Lower leg skin (tissue), 4 donors: ENCODE measurements at regions of chr7 and their contacts with region 1.

Region 1: DNA sequence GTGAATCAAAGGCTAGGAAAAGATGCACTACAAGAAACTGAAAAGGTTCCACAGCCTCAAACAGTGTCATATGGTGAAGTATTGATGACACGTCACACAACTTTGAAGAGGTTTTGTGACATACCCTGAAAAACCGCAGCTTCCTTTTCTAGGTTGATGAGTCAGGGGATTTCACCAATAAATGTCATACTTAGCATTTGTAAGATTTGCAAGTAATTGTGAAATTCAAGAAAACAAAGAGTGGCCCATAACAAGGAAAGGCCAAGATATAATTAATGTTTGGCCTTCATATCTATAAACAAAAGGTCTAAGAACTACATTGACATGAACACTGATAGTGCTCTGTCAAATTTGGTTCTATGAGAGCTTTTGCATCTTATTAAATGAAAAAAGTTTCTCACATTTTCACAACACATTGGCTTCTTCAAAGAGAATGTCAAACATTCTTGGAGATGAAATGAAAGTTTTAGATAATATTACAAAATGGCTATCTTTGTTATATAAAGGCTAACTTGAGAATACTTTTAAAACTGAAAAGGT is 62.0 kb upstream of the NAMPT start:
- DNase-seq: peak in 1 of 2 donors; percentile 29
- H3K4me3 ChIP-seq: no peak overlapping the region
- CTCF ChIP-seq: no peak
- POLR2A ChIP-seq: no peak

Region 2: DNA sequence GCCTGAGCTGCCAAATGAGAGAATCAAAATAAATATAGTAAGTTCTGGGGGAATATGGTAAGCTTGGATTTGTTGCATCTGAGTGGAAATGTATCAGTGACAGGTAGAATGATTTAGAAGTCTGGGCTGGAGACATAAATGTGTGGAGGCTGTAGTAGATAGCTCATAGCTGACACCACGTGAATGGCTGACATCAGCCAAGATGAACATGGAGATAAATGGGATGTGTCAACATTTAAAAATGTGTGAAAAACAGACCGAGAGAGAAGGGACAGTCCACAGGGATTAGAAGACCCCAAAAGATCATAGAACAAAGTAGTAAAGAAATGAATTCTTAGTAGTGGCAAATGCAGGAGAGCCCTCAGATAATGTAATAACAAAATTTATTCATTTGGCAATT is 102.9 kb before region 1 on chr7:
- intact Hi-C with region 1: no loop called
- DNase-seq: no peak
- H3K4me3 ChIP-seq: no peak overlapping the region
- CTCF ChIP-seq: no peak
- POLR2A ChIP-seq: no peak

Region 3: GRCh38 chr7:106313966-106314365 is 32.8 kb before region 1 on chr7:
- intact Hi-C with region 1: loop called (anchors 2 kb)
- DNase-seq: no peak
- H3K4me3 ChIP-seq: no peak overlapping the region
- CTCF ChIP-seq: no peak
- POLR2A ChIP-seq: no peak